Cardiac septum (tissue), 1 donor: ENCODE measurements at regions of chr9 and their contacts with region 1.

Region 1: DNA sequence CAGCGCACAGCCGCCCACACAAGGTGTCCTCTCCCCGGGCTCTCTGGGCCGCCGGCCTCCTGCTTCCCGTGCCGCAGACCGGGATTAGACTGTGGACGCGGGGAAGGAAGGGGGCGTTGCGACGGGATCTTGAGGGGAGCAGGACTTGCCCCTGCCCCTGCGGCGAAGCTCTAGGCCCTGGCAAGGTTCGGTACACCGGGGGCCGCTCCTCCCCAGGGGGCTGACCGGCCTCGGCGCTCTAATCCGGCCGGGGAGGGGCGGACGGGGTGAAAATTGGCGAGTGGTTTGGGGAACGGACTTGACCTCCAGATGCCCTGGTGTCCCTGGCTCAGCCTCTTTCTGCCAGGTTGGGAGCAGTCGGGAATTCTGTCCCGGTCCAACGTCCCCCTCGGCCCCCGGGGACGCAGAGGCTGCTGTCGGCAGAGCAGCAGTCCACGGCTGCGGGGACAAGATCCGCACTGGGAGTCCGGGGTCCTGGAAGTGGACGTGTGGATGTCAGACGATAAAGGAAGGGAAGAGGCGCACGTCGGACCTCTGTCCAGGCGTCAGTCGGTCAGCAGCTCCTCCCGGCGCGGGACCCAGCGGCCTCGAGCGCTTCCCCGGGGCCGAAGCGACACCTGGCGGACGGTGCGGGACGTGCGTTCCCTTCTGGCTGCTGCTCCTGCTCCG is 1.9 kb upstream of the CNTFR start:
- DNase-seq: peak; percentile 94

Region 2: DNA sequence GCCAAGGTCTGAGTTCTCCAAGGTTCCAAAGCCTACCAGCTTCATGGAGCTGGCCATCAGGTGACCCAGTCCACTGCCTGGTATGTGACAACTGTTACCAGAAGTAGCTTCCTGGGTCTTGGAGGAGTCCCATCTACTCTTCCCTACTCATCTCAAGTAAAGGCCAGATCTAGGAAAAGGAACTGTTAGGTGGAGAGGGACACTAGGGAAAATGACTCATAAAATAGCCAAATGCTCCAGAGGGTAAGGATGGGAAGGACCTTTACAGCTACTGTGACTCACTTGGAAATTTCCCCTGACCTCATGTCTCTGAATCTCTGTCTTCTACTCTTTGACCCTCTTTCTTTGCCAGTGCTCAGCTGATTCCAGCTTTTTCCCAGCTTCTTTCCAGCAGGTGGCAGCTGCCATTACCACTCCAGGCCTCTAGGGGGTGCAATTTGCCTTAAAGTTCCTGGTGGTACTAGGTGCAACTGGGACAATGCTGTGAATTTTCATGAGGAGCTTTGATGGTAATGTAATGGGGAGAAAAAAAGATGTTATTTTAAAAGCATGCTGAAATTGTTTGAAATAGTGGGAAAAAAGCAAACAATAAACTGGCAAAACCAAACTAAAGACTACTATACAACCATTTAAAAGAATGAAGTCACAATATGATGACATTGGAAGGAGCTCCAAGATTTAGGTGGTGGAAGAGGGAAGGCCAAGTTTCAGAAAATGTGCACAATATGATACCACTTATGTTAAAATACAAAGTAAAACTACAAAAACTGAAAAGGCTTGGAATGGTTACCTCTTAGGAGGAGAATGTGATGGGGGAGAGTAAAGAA is 187.6 kb before region 1 on chr9:
- intact Hi-C with region 1: loop called (anchors 5 kb)
- DNase-seq: peak; percentile 82

Region 3: DNA sequence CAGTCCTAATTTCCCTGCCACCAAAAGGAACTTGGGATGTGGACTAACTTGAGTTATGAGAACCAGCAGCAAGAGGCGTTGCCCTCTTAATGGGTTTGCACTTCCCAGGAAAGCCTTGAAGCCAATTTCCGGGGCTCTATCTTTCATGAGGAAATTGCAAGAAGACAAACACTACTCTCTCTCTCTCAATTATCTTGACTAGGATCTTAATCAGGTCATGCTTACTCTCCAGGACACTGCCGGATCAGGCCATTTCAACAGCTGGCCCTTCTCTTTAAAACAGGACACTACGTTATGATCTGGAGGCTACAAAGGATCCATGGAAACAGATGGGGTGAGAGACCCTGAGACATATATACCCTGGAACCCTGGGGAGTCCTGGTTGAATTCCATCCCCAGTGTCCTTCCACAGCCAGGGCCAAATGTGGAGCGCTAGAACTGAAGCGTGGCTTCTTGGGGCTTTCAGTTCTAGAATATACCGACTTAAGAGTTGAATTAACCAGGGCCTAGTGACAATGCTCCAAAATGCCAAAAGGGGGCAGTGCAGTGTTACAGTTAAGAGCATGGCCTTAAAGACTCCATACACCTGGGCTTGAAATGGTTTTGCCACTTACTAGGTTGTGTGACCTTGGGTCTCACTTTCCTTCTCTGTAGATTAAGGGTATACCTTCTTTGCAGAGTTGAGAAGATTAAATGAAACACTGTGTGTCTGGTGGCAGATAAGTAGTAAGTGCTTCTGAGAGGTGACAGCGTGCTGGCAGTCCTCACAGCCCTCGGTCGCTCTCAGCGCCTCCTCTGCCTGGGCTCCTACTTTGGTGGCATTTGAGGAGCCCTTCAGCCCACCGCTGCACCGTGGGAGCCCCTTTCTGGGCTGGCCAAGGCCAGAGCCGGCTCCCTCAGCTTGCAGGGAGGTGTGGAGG is 154.1 kb before region 1 on chr9:
- intact Hi-C with region 1: loop called (anchors 5 kb)
- DNase-seq: no peak

Region 4: GRCh38 chr9:34686231-34686630 is 94.8 kb after region 1 on chr9:
- intact Hi-C with region 1: no loop called
- DNase-seq: peak; percentile 20